CD4-positive, alpha-beta memory T cell (primary cell): ENCODE measurements at regions of chr9 and their contacts with region 1.

Region 1: GRCh38 chr9:99057665-99058625 is 47.0 kb upstream of the TGFBR1 start:
- DNase-seq: peak; percentile 73 to 86 (median 81)
- H3K4me3 ChIP-seq: peak overlapping the region; percentile 7 to 71
- H3K4me3 Mint-ChIP-seq: peak overlapping the region; percentile 83 to 95 (median 88)
- H3K27ac ChIP-seq: peak overlapping the region; percentile 30
- H3K27ac Mint-ChIP-seq: peak overlapping the region; percentile 80 to 93 (median 86)
- H3K4me1 ChIP-seq: peaks cover 71% of the 10 kb centered on the region
- H3K4me1 Mint-ChIP-seq: peaks cover 59 to 92% (median 77%) of the 10 kb centered on the region in 4 donors
- H3K27me3 ChIP-seq: no peaks in the 10 kb centered on the region
- H3K27me3 Mint-ChIP-seq: no peaks in the 10 kb centered on the region

Region 2: DNA sequence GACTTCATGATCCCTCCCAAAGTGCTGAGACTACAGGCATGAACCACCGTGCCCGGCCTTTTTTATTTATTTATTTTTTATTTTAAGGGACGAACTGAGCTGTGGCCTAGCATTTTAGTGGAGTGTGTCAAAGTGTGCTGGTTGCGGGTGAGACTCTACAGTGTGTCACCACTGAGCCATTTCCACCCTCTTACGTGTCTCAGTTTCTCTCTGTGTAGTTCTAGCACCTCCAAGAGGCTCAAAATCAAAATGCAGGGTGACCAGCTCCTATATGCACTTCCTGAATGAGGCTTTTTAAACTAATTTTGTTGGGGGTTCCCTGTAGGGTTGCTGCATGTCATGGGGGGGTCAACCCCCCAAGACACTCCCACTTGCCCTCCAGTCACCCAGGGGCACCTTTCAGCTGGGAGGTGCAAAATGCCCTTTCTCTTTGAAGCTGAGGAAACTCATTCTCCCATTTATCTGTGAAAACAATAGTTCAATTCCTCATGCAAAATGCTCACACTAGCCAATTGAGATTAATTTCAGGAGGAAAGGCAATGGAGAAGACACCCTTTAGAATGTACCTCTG is 44.9 kb before region 1 on chr9:
- CTCF ChIA-PET with region 1: interaction called, 9 read pairs
- POLR2A ChIA-PET with region 1: interaction called, 10 read pairs
- intact Hi-C with region 1: loop called (anchors 2 kb)
- DNase-seq: peak in 2 of 5 donors; percentile 12 to 22
- H3K4me3 ChIP-seq: no peak overlapping the region
- H3K4me3 Mint-ChIP-seq: peak overlapping the region in 7 of 8 donors; percentile 4 to 87 (median 75)
- H3K27ac ChIP-seq: no peak overlapping the region
- H3K27ac Mint-ChIP-seq: peak overlapping the region in 6 of 7 donors; percentile 35 to 90 (median 66)
- H3K4me1 ChIP-seq: peaks cover 18% of the 10 kb centered on the region
- H3K4me1 Mint-ChIP-seq: peaks cover 16 to 26% (median 20%) of the 10 kb centered on the region in 4 donors
- H3K27me3 ChIP-seq: no peaks in the 10 kb centered on the region
- H3K27me3 Mint-ChIP-seq: no peaks in the 10 kb centered on the region

Region 3: DNA sequence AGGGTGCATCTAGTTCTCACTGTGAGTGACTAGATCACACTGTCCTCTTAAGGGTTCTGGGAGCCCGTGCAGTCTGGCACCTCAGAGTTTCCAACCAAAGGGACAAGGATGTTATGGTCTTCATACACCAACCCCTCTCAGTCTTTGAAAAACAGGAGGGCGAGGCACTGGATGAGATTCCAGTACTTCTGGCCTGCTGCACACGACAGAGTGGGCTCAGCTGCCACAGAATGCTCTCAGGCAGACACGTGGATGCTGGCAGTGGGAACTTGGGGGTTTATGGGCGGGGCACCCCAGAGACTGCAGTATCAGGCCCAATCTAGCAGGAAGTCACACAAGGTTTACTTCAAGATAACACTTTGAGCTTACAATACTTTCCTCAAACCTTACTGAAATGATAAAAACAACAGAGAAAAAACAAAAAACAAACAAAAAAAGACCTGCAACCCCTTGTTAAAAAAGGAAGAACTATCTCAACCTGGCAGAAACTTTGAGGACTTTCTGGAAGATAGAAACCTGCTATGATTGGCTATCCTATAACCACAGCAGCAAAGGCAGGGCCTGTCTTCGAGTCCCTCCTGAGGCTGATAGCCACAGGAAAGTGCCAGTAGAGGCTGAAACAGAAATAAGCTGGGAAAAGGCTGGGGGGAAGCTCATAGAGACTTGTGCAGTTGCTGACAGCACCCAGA is 18.7 kb after region 1 on chr9:
- CTCF ChIA-PET with region 1: interaction called, 11 read pairs
- POLR2A ChIA-PET with region 1: interaction called, 58 read pairs
- intact Hi-C with region 1: loop called (anchors 2 kb)
- DNase-seq: peak; percentile 39 to 61 (median 50)
- H3K4me3 ChIP-seq: no peak overlapping the region
- H3K4me3 Mint-ChIP-seq: peak overlapping the region; percentile 31 to 81 (median 65)
- H3K27ac ChIP-seq: peak overlapping the region; percentile 8
- H3K27ac Mint-ChIP-seq: peak overlapping the region; percentile 72 to 94 (median 82)
- H3K4me1 ChIP-seq: peaks cover 36% of the 10 kb centered on the region
- H3K4me1 Mint-ChIP-seq: peaks cover 32 to 66% (median 47%) of the 10 kb centered on the region in 4 donors
- H3K27me3 ChIP-seq: no peaks in the 10 kb centered on the region
- H3K27me3 Mint-ChIP-seq: no peaks in the 10 kb centered on the region

Region 4: GRCh38 chr9:99118782-99119466 is 61.0 kb after region 1 on chr9:
- CTCF ChIA-PET with region 1: interaction called, 9 read pairs
- POLR2A ChIA-PET with region 1: interaction called, 42 read pairs
- intact Hi-C with region 1: no loop called
- DNase-seq: peak; percentile 66 to 78 (median 70)
- H3K4me3 ChIP-seq: peak overlapping the region; percentile 5 to 7
- H3K4me3 Mint-ChIP-seq: peak overlapping the region; percentile 49 to 95 (median 78)
- H3K27ac ChIP-seq: no peak overlapping the region
- H3K27ac Mint-ChIP-seq: peak overlapping the region; percentile 33 to 95 (median 78)
- H3K4me1 ChIP-seq: peaks cover 90% of the 10 kb centered on the region
- H3K4me1 Mint-ChIP-seq: peaks cover 65 to 91% (median 75%) of the 10 kb centered on the region in 4 donors
- H3K27me3 ChIP-seq: no peaks in the 10 kb centered on the region
- H3K27me3 Mint-ChIP-seq: no peaks in the 10 kb centered on the region

Region 5: GRCh38 chr9:99140685-99141314 is 82.9 kb after region 1 on chr9:
- CTCF ChIA-PET with region 1: interaction called, 29 read pairs
- POLR2A ChIA-PET with region 1: interaction called, 21 read pairs
- intact Hi-C with region 1: loop called (anchors 2 kb)
- DNase-seq: peak; percentile 50 to 56 (median 53)
- H3K4me3 ChIP-seq: no peak overlapping the region
- H3K4me3 Mint-ChIP-seq: peak overlapping the region in 1 of 8 donors; percentile 21
- H3K27ac ChIP-seq: no peak overlapping the region
- H3K27ac Mint-ChIP-seq: peak overlapping the region; percentile 16 to 58 (median 43)
- H3K4me1 ChIP-seq: peaks cover 16% of the 10 kb centered on the region
- H3K4me1 Mint-ChIP-seq: peaks cover 21 to 31% (median 24%) of the 10 kb centered on the region in 4 donors
- H3K27me3 ChIP-seq: no peaks in the 10 kb centered on the region
- H3K27me3 Mint-ChIP-seq: no peaks in the 10 kb centered on the region